Breast epithelium (tissue), 4 donors: ENCODE measurements at regions of chr2 and their contacts with region 1.

Region 1: DNA sequence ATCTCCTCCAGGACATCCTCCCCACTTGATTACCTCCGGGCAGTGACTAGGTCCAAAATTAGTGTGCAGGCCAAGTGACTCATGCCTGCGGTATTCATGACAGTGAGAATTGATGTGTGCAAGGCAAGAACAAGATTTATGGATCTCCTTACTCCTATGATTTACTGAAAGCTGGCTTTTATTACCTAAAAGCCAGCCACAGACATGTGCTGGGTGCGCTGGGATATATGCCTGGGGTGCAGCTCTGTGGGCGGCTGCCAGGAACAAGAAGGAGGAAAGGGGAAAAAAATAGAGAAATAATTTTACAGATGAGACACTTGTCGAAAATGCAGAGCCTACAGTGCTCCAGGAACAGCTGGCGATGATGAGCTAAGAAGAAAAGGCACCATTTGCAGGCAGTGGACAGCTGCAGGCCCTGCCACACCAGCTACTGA is 359.3 kb downstream of the CMPK2 start:
- DNase-seq: no peak
- H3K4me3 ChIP-seq: no peak overlapping the region
- H3K27ac ChIP-seq: no peak overlapping the region
- H3K4me1 ChIP-seq: no peaks in the 10 kb centered on the region
- H3K27me3 ChIP-seq: no peaks in the 10 kb centered on the region
- CTCF ChIP-seq: no peak
- POLR2A ChIP-seq: no peak

Region 2: DNA sequence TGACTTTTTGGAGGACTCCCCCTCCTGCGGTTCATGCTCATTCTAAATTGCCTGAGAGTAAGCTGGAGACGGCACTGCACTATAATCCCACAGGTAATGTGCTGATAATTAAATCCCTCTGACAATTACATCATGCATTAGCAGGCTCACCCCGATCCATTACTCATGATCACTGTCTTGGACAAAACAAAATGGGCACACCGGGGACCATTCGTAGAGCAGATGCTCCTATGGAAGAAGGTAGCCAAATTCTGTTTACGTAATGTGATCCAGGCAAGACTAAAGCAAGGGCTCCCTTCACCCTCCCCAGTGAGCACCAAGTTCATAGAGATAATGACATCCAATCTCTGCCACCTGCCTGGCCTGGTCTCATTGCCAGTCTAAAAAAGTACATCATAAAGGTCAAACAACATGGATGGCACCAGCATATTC is 1471.3 kb before region 1 on chr2:
- intact Hi-C with region 1: loop called (anchors 10 kb)
- DNase-seq: no peak
- H3K4me3 ChIP-seq: no peak overlapping the region
- H3K27ac ChIP-seq: no peak overlapping the region
- H3K4me1 ChIP-seq: no peaks in the 10 kb centered on the region
- H3K27me3 ChIP-seq: no peaks in the 10 kb centered on the region
- CTCF ChIP-seq: no peak
- POLR2A ChIP-seq: no peak

Region 3: DNA sequence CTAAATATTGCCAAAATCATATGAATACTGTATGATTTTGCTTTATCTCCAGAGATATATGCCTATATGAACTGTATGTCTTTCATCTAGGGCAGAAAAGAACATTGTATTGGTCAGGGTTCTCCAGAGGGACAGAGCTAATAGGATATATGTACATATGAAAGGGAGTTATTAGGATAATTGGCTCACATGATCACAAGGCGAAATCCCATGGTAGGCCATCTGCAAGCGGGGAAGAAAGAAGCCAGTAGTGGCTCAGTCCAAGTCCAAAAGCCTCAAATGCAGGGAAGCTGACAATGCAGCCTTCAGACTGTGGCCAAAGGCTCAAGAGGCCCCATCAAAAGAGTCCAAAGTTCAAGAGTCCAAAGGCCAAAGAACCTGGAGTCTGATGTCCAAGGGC is 620.8 kb after region 1 on chr2:
- intact Hi-C with region 1: no loop called
- DNase-seq: no peak
- H3K4me3 ChIP-seq: no peak overlapping the region
- H3K27ac ChIP-seq: no peak overlapping the region
- H3K4me1 ChIP-seq: no peaks in the 10 kb centered on the region
- H3K27me3 ChIP-seq: no peaks in the 10 kb centered on the region
- CTCF ChIP-seq: no peak
- POLR2A ChIP-seq: no peak